Heart right ventricle (tissue), 16 donors: ENCODE measurements at regions of chr11 and their contacts with region 1.

Region 1: DNA sequence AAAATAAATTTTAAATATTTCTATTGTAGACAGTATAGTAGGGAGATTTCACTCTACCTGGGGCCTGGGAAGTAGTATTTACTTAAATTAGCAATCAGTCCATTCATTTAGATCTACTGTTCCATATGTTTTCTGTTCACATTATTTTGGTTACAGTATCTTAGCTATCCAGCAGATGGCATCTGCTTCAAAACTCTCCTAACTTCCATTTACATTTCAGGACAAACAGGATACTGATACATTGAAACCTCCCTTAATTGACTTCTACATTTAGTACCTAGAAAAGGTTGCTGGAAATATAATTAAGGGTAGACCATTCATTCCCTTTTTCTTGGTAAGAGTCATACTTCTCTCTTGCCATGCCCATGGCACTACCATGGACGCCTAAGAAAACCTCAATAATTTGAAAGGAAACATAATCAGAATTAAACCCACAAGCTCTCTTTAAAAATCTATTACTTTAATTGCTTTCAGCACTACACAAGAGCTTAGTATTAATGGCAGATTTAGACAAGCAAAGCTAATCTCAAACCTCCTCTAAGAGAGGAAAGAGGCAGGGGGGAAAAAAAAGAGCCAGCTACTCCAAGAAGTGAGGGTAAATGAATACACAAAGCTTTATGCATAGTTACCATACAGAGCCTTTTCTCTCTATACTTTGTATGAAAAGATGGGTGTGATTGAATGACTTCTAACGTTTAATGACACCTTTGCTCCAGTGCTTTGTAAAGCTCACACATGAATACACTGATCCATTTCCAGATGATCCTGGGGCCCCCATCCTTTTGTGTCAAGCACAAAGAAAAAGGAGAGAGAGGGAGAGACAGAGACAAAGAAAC is 131.2 kb upstream of the MTMR2 start:
- DNase-seq: no peak
- ATAC-seq: peak in 5 of 8 donors; percentile 6 to 56 (median 50)
- H3K4me3 ChIP-seq: no peak overlapping the region
- H3K27ac ChIP-seq: peak overlapping the region in 2 of 10 donors; percentile 2 to 19
- H3K4me1 ChIP-seq: peaks cover 0 to 52% (median 23%) of the 10 kb centered on the region in 9 donors
- H3K27me3 ChIP-seq: no peaks in the 10 kb centered on the region
- CTCF ChIP-seq: peak; percentile 48 to 83 (median 65)

Region 2: GRCh38 chr11:95671768-95672167 is 383.3 kb before region 1 on chr11:
- intact Hi-C with region 1: no loop called
- DNase-seq: no peak
- ATAC-seq: no peak
- H3K4me3 ChIP-seq: no peak overlapping the region
- H3K27ac ChIP-seq: no peak overlapping the region
- H3K4me1 ChIP-seq: peaks cover 0 to 22% (median 6%) of the 10 kb centered on the region in 9 donors
- H3K27me3 ChIP-seq: no peaks in the 10 kb centered on the region
- CTCF ChIP-seq: no peak

Region 3: GRCh38 chr11:95835768-95836488 is 219.2 kb before region 1 on chr11:
- intact Hi-C with region 1: loop called in 2 of 10 experiments (anchors 10 kb)
- DNase-seq: peak in 1 of 2 donors; percentile 60
- ATAC-seq: peak; percentile 79 to 97 (median 94)
- H3K4me3 ChIP-seq: no peak overlapping the region
- H3K27ac ChIP-seq: peak overlapping the region in 4 of 10 donors; percentile 24 to 42 (median 30)
- H3K4me1 ChIP-seq: peaks cover 0 to 8% (median 0%) of the 10 kb centered on the region in 9 donors
- H3K27me3 ChIP-seq: no peaks in the 10 kb centered on the region
- CTCF ChIP-seq: peak; percentile 77 to 93 (median 87)

Region 4: DNA sequence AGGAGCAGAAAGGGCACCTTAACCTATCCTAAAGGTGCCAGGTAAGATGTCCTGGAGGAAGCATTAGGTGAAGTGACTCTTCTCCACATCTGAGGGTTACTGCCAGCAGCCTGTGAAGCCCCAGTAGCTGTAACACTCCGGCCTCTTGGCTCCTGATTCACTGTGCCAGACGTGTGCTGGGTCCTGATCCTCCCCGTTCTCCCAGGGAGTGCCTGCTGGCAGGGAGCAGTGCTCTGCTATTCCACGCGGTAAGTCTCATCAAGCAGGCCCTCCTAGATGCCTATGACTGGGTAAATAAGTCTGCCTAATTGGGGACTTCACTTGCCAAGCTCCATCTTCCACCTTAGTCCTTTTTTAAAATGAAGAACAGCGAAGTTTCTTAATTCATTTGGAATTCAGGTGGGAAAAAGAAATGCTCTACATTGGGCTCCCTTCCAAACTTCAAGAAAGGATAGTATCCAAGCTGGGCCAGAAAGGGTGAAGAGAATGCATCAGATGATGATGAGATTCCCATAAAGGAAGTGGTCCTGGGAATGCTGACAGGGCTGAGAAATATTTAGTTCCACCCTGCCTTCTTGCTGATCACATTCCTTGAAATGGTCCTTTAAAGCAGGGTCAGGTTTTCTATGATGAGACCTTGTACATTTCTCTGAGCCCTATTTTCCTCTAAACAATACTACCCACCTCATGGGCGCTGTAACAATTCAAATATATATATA is 99.9 kb after region 1 on chr11:
- intact Hi-C with region 1: loop called in 2 of 10 experiments (anchors 5 kb)
- DNase-seq: no peak
- ATAC-seq: no peak
- H3K4me3 ChIP-seq: no peak overlapping the region
- H3K27ac ChIP-seq: peak overlapping the region; percentile 77 to 88 (median 84)
- H3K4me1 ChIP-seq: peaks cover 13 to 52% (median 44%) of the 10 kb centered on the region in 9 donors
- H3K27me3 ChIP-seq: no peaks in the 10 kb centered on the region
- CTCF ChIP-seq: no peak

Region 5: GRCh38 chr11:96228473-96228891 is 173.4 kb after region 1 on chr11:
- intact Hi-C with region 1: loop called in 1 of 10 experiments (anchors 10 kb)
- DNase-seq: peak; percentile 61 to 71
- ATAC-seq: peak; percentile 69 to 90 (median 80)
- H3K4me3 ChIP-seq: no peak overlapping the region
- H3K27ac ChIP-seq: peak overlapping the region; percentile 17 to 87 (median 72)
- H3K4me1 ChIP-seq: peaks cover 3 to 67% (median 33%) of the 10 kb centered on the region in 9 donors
- H3K27me3 ChIP-seq: no peaks in the 10 kb centered on the region
- CTCF ChIP-seq: no peak

Region 6: GRCh38 chr11:96254087-96254486 is 199.0 kb after region 1 on chr11:
- intact Hi-C with region 1: loop called in 2 of 10 experiments (anchors 5 to 10 kb)
- DNase-seq: peak in 1 of 2 donors; percentile 80
- ATAC-seq: peak in 7 of 8 donors; percentile 56 to 86 (median 73)
- H3K4me3 ChIP-seq: peak overlapping the region in 5 of 10 donors; percentile 5 to 37 (median 17)
- H3K27ac ChIP-seq: peak overlapping the region in 7 of 10 donors; percentile 32 to 79 (median 65)
- H3K4me1 ChIP-seq: peaks cover 17 to 67% (median 59%) of the 10 kb centered on the region in 9 donors
- H3K27me3 ChIP-seq: no peaks in the 10 kb centered on the region
- CTCF ChIP-seq: no peak